ENCODE measurements at regions of chr1 and their contacts with region 1.

Region 1: GRCh38 chr1:89843281-89844121 is 22.7 kb downstream of the LRRC8D start:
- DNase-seq: peak; percentile 70 to 72
- ATAC-seq: peak; percentile 93 to 94
- H3K4me3 ChIP-seq: peak overlapping the region; percentile 81
- H3K27ac ChIP-seq: peak overlapping the region; percentile 97
- H3K4me1 ChIP-seq: peaks cover 69% of the 10 kb centered on the region
- CTCF ChIP-seq: peak; percentile 49
- EP300 ChIP-seq: no peak
- POLR2A ChIP-seq: peak; percentile 60
- RAD21 ChIP-seq: peak; percentile 32 to 65; a peak in 4 of 5 replicates

Region 2: DNA sequence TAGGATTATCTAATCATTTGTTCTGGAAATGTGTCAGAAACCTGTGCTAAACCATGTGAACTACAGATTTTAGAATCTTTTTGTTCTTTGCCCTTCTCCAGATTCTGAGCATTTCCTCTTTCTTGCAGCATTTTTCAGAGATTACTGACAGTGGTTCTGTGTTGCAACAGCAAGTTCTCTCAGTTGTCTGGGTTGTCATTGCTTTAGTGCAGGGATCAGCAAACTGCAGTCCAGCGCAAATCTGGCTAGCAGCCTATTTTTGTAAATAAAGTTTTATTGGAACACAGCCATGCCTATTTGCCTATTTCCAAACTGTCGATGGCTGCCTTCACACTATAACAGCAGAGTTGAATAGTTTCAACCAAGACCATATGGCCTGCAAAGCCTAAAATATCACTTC is 89.0 kb before region 1 on chr1:
- CTCF ChIA-PET with region 1: no interaction called
- POLR2A ChIA-PET with region 1: no interaction called
- DNase-seq: no peak
- ATAC-seq: no peak
- H3K4me3 ChIP-seq: no peak overlapping the region
- H3K27ac ChIP-seq: no peak overlapping the region
- H3K4me1 ChIP-seq: no peaks in the 10 kb centered on the region
- CTCF ChIP-seq: no peak
- EP300 ChIP-seq: no peak
- POLR2A ChIP-seq: no peak
- RAD21 ChIP-seq: no peak

Region 3: GRCh38 chr1:89804642-89805237 is 38.8 kb before region 1 on chr1:
- CTCF ChIA-PET with region 1: interaction called, 11 read pairs
- POLR2A ChIA-PET with region 1: no interaction called
- DNase-seq: peak; percentile 61 to 84
- ATAC-seq: peak; percentile 84 to 92; a peak in 5 of 6 replicates
- H3K4me3 ChIP-seq: no peak overlapping the region
- H3K27ac ChIP-seq: peak overlapping the region in 1 of 2 experiments; percentile 45; a peak in 1 of 6 replicates
- H3K4me1 ChIP-seq: peaks cover 33% of the 10 kb centered on the region
- CTCF ChIP-seq: peak; percentile 89
- EP300 ChIP-seq: no peak
- POLR2A ChIP-seq: no peak
- RAD21 ChIP-seq: peak; percentile 88 to 95

Region 4: DNA sequence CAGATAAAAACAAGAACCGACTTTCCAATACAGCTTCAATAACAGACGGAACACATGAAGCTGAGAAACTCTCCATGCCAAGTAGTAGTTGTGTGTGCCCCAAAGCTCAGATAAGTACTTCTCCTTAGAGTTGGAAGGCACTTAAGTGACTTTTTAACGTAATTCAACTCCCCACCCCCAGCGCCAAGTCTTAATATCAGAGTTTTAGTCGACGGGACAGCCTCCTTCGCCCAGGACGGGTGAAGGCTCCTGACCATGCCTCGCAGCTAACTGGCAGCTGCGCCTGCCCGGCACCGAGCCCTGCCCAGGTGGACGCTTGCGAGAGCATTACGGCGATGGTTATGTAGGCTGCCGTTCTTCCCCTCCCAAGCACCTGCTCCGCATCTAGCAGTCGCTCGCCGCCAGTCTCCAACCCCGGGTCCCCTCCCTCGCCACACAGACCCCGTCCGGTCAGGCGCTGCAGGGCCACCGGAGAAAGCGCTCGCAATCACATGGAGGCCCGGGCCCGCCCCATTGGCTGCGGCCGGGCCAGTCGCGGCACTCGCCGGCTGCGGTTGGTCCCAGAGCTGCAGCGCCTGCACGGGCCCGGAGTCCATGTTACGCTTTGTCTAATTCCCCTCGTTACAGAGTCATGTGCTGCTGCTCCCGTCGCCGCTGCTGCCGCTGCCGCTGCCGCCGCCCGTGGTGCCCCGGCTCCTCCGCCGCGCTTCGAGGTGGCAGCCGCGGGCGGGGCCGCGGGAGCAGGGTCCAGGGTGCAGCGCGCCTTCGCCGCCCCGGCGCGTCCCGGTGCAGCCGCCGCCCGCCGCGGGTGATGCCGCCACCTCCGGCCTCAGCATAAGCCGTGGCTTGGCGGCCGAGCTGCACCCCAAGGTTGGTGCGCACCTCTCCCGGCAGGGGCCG is 22.8 kb before region 1 on chr1 and contains the start of gene LRRC8D:
- CTCF ChIA-PET with region 1: interaction called, 14 read pairs
- POLR2A ChIA-PET with region 1: interaction called, 5 read pairs
- DNase-seq: peak; percentile 69 to 74
- ATAC-seq: peak; percentile 93 to 96
- H3K4me3 ChIP-seq: peak within 1 kb of the TSS; percentile 97
- H3K27ac ChIP-seq: peak within 1 kb of the TSS; percentile 94 to 99
- H3K4me1 ChIP-seq: peaks cover 30% of the 10 kb centered on the region
- CTCF ChIP-seq: no peak
- EP300 ChIP-seq: no peak
- POLR2A ChIP-seq: peak; percentile 27; the same call in 1 of the 2 replicates
- RAD21 ChIP-seq: no peak
- polyA plus RNA-seq, gene LRRC8D: 76.7 and 77.4 TPM in 2 replicates

Region 5: GRCh38 chr1:89865498-89866385 is 22.2 kb after region 1 on chr1:
- CTCF ChIA-PET with region 1: interaction called, 11 read pairs
- POLR2A ChIA-PET with region 1: interaction called, 3 read pairs
- DNase-seq: peak in 1 of 2 experiments; percentile 23
- ATAC-seq: peak in 1 of 2 experiments; percentile 56; a peak in 4 of 6 replicates
- H3K4me3 ChIP-seq: no peak overlapping the region
- H3K27ac ChIP-seq: peak overlapping the region; percentile 56 to 62; a peak in 5 of 6 replicates
- H3K4me1 ChIP-seq: peaks cover 42% of the 10 kb centered on the region
- CTCF ChIP-seq: no peak
- EP300 ChIP-seq: peak in 1 of 2 experiments; percentile 19; a peak in 1 of 5 replicates
- POLR2A ChIP-seq: no peak
- RAD21 ChIP-seq: no peak

Region 6: DNA sequence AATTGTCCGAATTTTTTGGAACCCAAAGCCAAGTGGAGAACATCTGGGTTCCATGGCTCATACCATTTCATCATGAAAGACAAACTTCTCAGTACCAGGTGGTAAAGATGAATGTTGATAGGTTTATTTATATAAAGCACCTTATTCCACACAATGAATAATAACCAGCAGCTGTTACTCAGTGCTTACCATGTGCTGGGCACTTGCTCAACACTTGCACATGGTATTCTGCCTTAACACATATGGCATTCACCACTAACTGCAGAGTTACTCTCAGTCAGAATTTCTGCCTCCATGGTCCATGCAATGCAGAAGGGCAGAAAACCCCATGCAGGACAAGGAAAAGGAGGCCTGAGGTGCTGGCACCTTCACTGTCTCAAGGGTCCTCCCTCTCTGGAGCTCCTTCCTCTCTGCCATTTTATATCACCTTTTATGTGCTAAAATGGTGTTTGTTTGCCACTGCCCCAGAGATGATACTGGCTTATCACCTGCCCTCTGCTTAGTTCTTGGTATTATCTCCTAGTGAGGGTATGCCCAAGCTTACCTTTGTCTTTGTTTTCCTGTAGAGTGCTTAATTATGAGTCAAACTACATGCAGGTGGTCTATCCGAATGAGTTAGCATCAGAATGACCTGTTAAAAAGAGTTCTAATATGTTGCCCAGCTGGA is 74.8 kb after region 1 on chr1:
- CTCF ChIA-PET with region 1: interaction called, 17 read pairs
- POLR2A ChIA-PET with region 1: no interaction called
- DNase-seq: no peak
- ATAC-seq: peak; percentile 66 to 71; a peak in 3 of 6 replicates
- H3K4me3 ChIP-seq: no peak overlapping the region
- H3K27ac ChIP-seq: peak overlapping the region; percentile 63 to 85
- H3K4me1 ChIP-seq: peaks cover 60% of the 10 kb centered on the region
- CTCF ChIP-seq: no peak
- EP300 ChIP-seq: no peak
- POLR2A ChIP-seq: no peak
- RAD21 ChIP-seq: no peak

Measured in A549 (cell line).